Activated CD8-positive, alpha-beta T cell treated with anti-CD3 and anti-CD28 coated beads, Interleukin-2, amount 10 ng/mL, durations not matched to agents 7 days and 5 days (primary cell): ENCODE measurements at regions of chr1 and their contacts with region 1.

Region 1: GRCh38 chr1:12177999-12178441 is 11.2 kb downstream of the TNFRSF1B start:
- DNase-seq: peak; percentile 86
- ATAC-seq: peak; percentile 61
- H3K4me3 Mint-ChIP-seq: peak overlapping the region; percentile 75
- H3K27ac Mint-ChIP-seq: peak overlapping the region; percentile 100
- H3K4me1 Mint-ChIP-seq: peaks cover 97% of the 10 kb centered on the region
- H3K27me3 Mint-ChIP-seq: no peaks in the 10 kb centered on the region

Region 2: DNA sequence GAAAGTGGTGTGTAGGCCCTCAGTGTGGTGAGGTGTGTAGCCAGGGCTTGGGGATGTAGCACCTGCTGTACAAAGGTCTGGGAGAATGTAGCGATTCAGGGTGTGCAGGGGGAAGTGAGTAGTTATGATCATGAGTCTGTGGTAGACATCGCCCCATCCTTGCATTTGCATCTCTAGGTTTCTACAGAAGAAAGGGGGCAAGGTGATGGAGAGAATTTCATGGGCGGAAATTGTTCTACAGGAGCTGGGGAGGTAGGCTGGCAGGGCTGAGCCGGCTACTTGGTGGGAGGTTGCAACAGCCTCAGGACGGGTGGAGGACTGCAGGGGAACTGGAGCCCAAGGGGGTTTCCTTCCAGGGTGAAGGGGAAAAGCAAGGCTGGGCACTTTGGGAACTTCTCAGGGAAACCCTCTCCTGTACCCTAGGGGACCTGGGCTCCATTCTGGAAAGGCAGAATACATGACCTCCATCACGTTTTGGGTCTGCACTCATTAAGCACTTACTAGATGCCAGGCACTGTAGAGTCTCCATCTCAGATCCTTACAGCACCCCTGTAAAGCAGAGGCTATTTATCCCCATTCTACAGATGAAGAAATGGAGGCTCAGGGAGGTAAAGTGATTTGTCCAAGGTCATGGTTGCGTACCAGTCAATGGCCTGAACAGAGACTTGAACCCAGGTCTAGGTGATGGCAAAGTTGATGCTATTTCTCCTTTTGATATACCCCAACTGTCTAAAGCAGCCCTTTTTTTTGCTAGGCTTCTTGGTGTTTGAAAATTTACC is 25.7 kb before region 1 on chr1:
- CTCF ChIA-PET with region 1: interaction called, 16 read pairs
- POLR2A ChIA-PET with region 1: interaction called, 41 read pairs
- DNase-seq: no peak
- ATAC-seq: no peak
- H3K4me3 Mint-ChIP-seq: peak overlapping the region; percentile 6
- H3K27ac Mint-ChIP-seq: peak overlapping the region; percentile 95
- H3K4me1 Mint-ChIP-seq: peaks cover 94% of the 10 kb centered on the region
- H3K27me3 Mint-ChIP-seq: no peaks in the 10 kb centered on the region

Region 3: DNA sequence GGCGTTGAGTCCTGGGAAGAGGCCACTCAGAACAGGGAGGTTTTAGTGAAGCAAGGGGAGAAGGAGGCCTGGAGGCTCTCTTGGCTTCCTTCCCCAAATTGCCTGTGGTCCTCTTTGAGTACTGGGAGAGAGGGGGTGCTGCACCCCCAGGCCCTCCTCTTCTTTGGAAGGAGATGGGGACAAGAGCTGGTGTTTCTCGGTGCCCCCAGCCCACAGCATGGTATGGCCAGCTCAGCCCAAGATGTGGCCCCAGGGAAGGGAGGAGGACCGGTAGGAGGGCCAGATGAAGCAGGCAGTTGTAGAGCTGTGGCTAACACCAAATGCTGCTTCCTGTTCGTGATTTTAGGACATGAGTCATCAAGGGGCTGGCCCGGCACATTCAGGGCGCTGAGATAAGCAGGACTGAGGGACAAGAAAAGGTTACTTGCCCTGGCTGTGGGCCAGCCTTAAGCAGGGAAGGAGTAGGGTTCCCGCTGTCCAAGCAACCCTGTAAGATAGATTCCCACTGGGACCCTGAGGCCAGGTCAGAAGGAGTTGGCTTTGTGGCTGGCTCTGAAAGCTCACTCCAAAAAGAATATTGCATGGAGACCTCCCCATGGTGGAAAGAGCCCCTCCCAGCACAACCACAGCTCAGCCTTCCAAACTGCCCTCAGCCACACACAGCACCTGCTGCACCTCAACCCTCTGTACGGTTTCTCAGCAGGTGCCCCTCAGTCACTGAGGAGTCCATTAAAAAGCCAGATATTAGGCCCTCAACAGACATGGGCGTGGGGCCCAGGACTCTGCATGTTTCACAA is 16.2 kb before region 1 on chr1:
- CTCF ChIA-PET with region 1: interaction called, 19 read pairs
- POLR2A ChIA-PET with region 1: interaction called, 46 read pairs
- DNase-seq: peak; percentile 91
- ATAC-seq: peak; percentile 90
- H3K4me3 Mint-ChIP-seq: peak overlapping the region; percentile 58
- H3K27ac Mint-ChIP-seq: peak overlapping the region; percentile 97
- H3K4me1 Mint-ChIP-seq: peaks cover 90% of the 10 kb centered on the region
- H3K27me3 Mint-ChIP-seq: no peaks in the 10 kb centered on the region

Region 4: GRCh38 chr1:12166834-12167492 is 11.1 kb before region 1 on chr1 and contains the start of gene TNFRSF1B:
- CTCF ChIA-PET with region 1: interaction called, 19 read pairs
- POLR2A ChIA-PET with region 1: interaction called, 46 read pairs
- DNase-seq: peak; percentile 74
- ATAC-seq: peak; percentile 67
- H3K4me3 Mint-ChIP-seq: peak within 1 kb of the TSS; percentile 100
- H3K27ac Mint-ChIP-seq: peak within 1 kb of the TSS; percentile 97
- H3K4me1 Mint-ChIP-seq: peaks cover 77% of the 10 kb centered on the region
- H3K27me3 Mint-ChIP-seq: no peaks in the 10 kb centered on the region
- total RNA-seq, gene TNFRSF1B: 274 to 284 TPM

Region 5: DNA sequence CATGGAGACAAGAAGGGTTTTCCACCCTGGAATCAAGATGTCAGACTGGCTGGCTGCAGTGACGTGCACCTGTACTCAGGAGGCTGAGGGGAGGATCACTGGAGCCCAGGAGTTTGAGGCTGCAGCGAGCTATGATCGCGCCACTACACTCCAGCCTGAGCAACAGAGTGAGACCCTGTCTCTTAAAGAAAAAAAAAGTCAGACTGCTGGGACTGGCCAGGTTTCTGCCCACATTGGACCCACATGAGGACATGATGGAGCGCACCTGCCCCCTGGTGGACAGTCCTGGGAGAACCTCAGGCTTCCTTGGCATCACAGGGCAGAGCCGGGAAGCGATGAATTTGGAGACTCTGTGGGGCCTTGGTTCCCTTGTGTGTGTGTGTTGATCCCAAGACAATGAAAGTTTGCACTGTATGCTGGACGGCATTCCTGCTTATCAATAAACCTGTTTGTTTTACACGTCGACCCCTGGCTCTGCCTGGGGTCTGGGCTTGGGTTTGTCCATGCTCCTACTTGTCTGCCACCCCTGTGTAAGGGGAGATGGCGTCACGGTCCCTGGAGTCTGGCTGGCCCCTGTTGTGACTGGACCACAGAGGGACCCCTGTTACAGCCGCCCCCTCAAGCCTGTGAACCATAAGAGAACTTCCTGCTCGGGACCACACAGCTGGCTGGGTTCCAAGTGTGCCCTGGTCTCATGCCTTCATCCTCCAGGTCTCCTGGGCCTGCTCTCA is 30.9 kb after region 1 on chr1:
- CTCF ChIA-PET with region 1: interaction called, 26 read pairs
- POLR2A ChIA-PET with region 1: interaction called, 4 read pairs
- DNase-seq: peak; percentile 88
- ATAC-seq: peak; percentile 76
- H3K4me3 Mint-ChIP-seq: no peak overlapping the region
- H3K27ac Mint-ChIP-seq: peak overlapping the region; percentile 78
- H3K4me1 Mint-ChIP-seq: peaks cover 63% of the 10 kb centered on the region
- H3K27me3 Mint-ChIP-seq: peaks cover 2% of the 10 kb centered on the region